Activated CD8-positive, alpha-beta memory T cell treated with anti-CD3 and anti-CD28 coated beads, Interleukin-2, amount 10 ng/mL, durations not matched to agents 7 days and 5 days (primary cell): ENCODE measurements at regions of chr18 and their contacts with region 1.

Region 1: GRCh38 chr18:11654736-11655605 is 34.1 kb upstream of the GNAL start:
- DNase-seq: peak; percentile 51
- ATAC-seq: no peak
- H3K4me3 Mint-ChIP-seq: no peak overlapping the region
- H3K27ac Mint-ChIP-seq: no peak overlapping the region
- H3K4me1 Mint-ChIP-seq: no peaks in the 10 kb centered on the region
- H3K27me3 Mint-ChIP-seq: peaks cover 34% of the 10 kb centered on the region

Region 2: DNA sequence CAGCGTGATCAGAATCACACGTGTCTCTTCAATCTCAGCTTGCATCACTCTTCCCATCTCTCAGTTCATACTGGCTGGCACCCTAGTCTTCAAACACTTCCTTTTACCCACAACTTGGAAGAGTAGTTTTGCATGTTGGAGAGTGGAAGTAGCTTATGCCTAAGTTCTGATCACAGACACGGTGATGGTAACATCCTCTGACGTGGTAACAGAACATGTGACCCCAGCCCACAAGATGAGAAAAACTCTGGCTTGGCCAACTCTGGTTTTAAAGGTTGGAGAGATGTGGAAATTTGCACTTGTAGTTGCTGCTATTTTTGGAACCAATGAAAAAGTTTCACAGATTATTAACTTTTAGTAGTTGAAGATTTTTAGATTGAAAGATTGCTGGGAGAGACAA is 200.9 kb before region 1 on chr18:
- CTCF ChIA-PET with region 1: no interaction called
- DNase-seq: no peak
- ATAC-seq: no peak
- H3K4me3 Mint-ChIP-seq: no peak overlapping the region
- H3K27ac Mint-ChIP-seq: no peak overlapping the region
- H3K4me1 Mint-ChIP-seq: no peaks in the 10 kb centered on the region
- H3K27me3 Mint-ChIP-seq: no peaks in the 10 kb centered on the region

Region 3: DNA sequence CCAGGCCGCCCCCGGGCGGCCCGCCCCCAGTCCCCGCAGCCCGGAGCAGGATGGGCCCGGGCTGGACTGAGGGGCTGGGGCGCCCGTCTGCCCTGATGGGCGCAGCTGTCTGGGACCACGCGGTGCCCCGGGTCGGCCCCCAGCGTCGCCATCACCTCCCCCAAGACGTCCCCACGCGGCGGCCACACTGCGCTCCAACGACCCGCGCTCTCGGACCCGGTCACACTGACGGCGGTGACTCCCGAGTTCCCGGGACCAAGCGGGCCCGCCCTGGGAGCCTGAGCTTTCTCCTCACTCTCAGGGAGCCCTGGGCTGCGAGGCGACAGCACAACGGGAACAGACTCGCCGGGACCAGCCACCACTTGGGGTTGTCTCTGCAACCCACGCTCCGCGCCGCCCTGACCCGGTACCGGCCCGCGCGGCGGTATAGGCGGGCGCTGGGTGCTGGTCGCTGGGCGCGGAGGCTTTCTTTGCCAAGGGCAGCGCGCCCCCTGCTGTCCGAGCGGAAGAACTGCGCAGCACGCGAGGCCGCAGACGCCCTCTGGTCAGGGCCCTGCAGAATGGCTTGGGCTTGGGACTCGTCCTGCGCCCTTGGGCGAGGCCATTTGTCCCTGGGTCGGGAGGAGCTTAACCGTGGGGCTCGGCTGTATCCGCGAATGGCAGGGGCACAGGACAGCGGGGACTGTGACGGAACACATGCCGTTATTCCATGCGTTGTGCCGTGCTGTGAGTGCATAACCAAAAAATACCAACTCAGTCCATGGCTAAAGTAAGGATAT is 383.9 kb after region 1 on chr18:
- CTCF ChIA-PET with region 1: interaction called, 15 read pairs
- DNase-seq: peak; percentile 80
- ATAC-seq: peak; percentile 89
- H3K4me3 Mint-ChIP-seq: peak overlapping the region; percentile 45
- H3K27ac Mint-ChIP-seq: no peak overlapping the region
- H3K4me1 Mint-ChIP-seq: peaks cover 14% of the 10 kb centered on the region
- H3K27me3 Mint-ChIP-seq: peaks cover 21% of the 10 kb centered on the region